ENCODE measurements at regions of chr11 and their contacts with region 1.

Region 1: DNA sequence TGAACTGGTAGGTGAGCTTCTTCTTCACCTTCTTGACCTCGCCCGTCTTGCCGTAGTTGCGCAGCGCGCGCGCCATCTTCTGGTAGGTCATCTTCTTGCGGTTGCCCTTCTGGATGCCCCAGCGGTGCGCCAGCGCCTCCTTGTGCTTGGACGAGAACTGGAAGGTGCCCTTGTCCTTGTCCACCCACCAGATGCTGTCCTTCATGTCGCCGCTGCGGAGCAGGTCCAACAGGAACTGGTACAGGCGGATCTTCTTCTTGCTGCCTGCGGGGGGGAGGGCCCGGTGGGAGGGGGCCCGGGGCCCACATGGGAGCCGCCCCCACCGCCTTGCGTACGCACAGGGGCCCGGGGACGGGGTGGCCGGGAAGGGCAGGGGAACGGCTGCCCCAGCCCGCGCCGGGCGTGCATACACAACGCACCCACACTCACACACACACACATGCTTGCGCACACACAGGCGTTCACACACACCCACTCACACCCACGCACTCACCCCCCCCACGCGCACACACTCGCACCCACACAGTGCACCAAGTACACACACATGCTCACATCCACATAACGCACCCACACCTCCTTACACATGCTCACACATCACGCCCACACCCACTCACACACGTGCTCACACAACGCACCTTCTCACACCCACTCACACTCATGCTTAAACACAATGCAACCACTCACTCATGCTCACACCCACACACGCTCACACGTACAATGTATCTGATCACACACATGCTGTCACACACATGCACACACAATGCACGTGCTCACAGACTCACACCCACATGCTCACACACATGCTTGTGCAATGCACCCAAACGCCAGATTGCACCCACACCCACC is 3.0 kb upstream of the MYBPC3 start:
- DNase-seq: peak in 1 of 2 donors; percentile 93
- H3K4me3 ChIP-seq: peak overlapping the region; percentile 65
- H3K27ac ChIP-seq: no peak overlapping the region
- H3K4me1 ChIP-seq: peaks cover 0 to 2% of the 10 kb centered on the region in 2 donors
- H3K27me3 ChIP-seq: no peaks in the 10 kb centered on the region
- CTCF ChIP-seq: peak; percentile 88 to 94 (median 92)

Region 2: GRCh38 chr11:46889689-46890475 is 465.6 kb before region 1 on chr11:
- intact Hi-C with region 1: loop called (anchors 5 kb)
- DNase-seq: peak in 1 of 2 donors; percentile 84
- H3K4me3 ChIP-seq: no peak overlapping the region
- H3K27ac ChIP-seq: no peak overlapping the region
- H3K4me1 ChIP-seq: no peaks in the 10 kb centered on the region
- H3K27me3 ChIP-seq: no peaks in the 10 kb centered on the region
- CTCF ChIP-seq: peak; percentile 82 to 88 (median 86)

Region 3: GRCh38 chr11:47176328-47177228 is 178.9 kb before region 1 on chr11 and contains the start of gene ARFGAP2:
- intact Hi-C with region 1: loop called (anchors 2 kb)
- DNase-seq: peak; percentile 89 to 98
- H3K4me3 ChIP-seq: peak within 1 kb of the TSS; percentile 98 to 99
- H3K27ac ChIP-seq: peak within 1 kb of the TSS; percentile 98 to 99
- H3K4me1 ChIP-seq: peaks cover 15 to 33% of the 10 kb centered on the region in 2 donors
- H3K27me3 ChIP-seq: no peaks in the 10 kb centered on the region
- CTCF ChIP-seq: no peak
- total RNA-seq, gene ARFGAP2: 66.1 TPM

Region 4: GRCh38 chr11:47257509-47258316 is 97.8 kb before region 1 on chr11 and contains the start of gene NR1H3:
- intact Hi-C with region 1: loop called (anchors 1 kb)
- DNase-seq: peak; percentile 24 to 86
- H3K4me3 ChIP-seq: peak within 1 kb of the TSS; percentile 48 to 64
- H3K27ac ChIP-seq: peak within 1 kb of the TSS; percentile 81 to 83
- H3K4me1 ChIP-seq: peaks cover 12 to 31% of the 10 kb centered on the region in 2 donors
- H3K27me3 ChIP-seq: no peaks in the 10 kb centered on the region
- CTCF ChIP-seq: peak; percentile 55 to 80 (median 65)
- total RNA-seq, gene NR1H3: 92.4 TPM